H1 (cell line): ENCODE measurements at regions of chr15 and their contacts with region 1.

Region 1: DNA sequence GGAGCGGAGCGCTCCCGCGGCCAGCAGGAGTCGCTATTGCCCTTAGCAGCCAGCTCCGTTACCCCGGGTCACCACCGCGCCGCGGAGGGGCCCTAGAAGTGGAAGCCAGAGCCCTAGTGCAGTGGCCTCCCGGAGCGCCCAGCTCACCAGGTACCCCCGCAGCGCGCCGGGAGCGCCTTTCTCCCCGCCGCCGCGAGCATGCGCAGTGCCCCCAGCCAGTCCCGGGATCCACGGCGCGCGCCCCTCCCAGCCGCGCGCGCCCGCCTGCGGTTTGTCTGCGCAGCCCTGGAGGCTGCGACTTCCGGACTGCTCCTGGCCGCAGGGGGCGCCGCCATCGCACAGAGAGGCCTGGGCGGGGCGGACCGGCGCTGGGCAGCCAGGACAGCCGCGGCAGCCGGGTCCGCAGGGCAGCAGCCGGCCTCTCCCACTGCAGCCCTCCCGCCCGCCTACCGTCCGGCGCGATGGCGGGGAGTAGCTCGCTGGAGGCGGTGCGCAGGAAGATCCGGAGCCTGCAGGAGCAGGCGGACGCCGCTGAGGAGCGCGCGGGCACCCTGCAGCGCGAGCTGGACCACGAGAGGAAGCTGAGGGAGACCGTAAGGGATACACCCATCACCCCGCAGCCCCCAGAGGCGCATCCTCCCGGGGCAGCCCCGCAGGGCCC is 5.7 kb downstream of the TPM1 start:
- DNase-seq: peak; percentile 90 to 98
- H3K4me3 ChIP-seq: peak overlapping the region; percentile 42 to 98 (median 69)
- H3K27ac ChIP-seq: peak overlapping the region; percentile 37; the same call in 1 of the 2 replicates
- H3K4me1 ChIP-seq: peaks cover 15 to 37% (median 23%) of the 10 kb centered on the region in 4 experiments
- H3K27me3 ChIP-seq: no peaks in the 10 kb centered on the region
- CTCF ChIP-seq: peak; percentile 82 to 93 (median 90)
- EP300 ChIP-seq: peak in 1 of 2 experiments; percentile 75; a peak in 1 of 3 replicates
- POLR2A ChIP-seq: peak; percentile 68 to 90
- RAD21 ChIP-seq: peak; percentile 70 to 78

Region 2: GRCh38 chr15:62847900-62848489 is 200.2 kb before region 1 on chr15:
- CTCF ChIA-PET with region 1: interaction called, 58 read pairs
- POLR2A ChIA-PET with region 1: interaction called, 195 read pairs
- DNase-seq: peak; percentile 60 to 87
- H3K4me3 ChIP-seq: no peak overlapping the region
- H3K27ac ChIP-seq: no peak overlapping the region
- H3K4me1 ChIP-seq: peaks cover 12 to 26% (median 22%) of the 10 kb centered on the region in 4 experiments
- H3K27me3 ChIP-seq: no peaks in the 10 kb centered on the region
- CTCF ChIP-seq: peak; percentile 64 to 81 (median 76)
- EP300 ChIP-seq: no peak
- POLR2A ChIP-seq: no peak
- RAD21 ChIP-seq: peak; percentile 85 to 92

Region 3: GRCh38 chr15:62912808-62913207 is 135.4 kb before region 1 on chr15:
- CTCF ChIA-PET with region 1: interaction called, 3 read pairs
- POLR2A ChIA-PET with region 1: interaction called, 26 read pairs
- DNase-seq: no peak
- H3K4me3 ChIP-seq: no peak overlapping the region
- H3K27ac ChIP-seq: no peak overlapping the region
- H3K4me1 ChIP-seq: peaks cover 7 to 14% (median 11%) of the 10 kb centered on the region in 4 experiments
- H3K27me3 ChIP-seq: no peaks in the 10 kb centered on the region
- CTCF ChIP-seq: peak in 2 of 3 experiments; percentile 19 to 36; a peak in 3 of 4 replicates
- EP300 ChIP-seq: no peak
- POLR2A ChIP-seq: no peak
- RAD21 ChIP-seq: peak in 1 of 2 experiments; percentile 40; a peak in 1 of 4 replicates

Region 4: GRCh38 chr15:62999923-63000561 is 48.2 kb before region 1 on chr15:
- CTCF ChIA-PET with region 1: interaction called, 9 read pairs
- POLR2A ChIA-PET with region 1: interaction called, 11 read pairs
- DNase-seq: no peak
- H3K4me3 ChIP-seq: no peak overlapping the region
- H3K27ac ChIP-seq: no peak overlapping the region
- H3K4me1 ChIP-seq: no peaks in the 10 kb centered on the region
- H3K27me3 ChIP-seq: no peaks in the 10 kb centered on the region
- CTCF ChIP-seq: no peak
- EP300 ChIP-seq: no peak
- POLR2A ChIP-seq: no peak
- RAD21 ChIP-seq: no peak

Region 5: GRCh38 chr15:63019539-63020109 is 28.6 kb before region 1 on chr15:
- CTCF ChIA-PET with region 1: interaction called, 8 read pairs
- POLR2A ChIA-PET with region 1: interaction called, 11 read pairs
- DNase-seq: no peak
- H3K4me3 ChIP-seq: no peak overlapping the region
- H3K27ac ChIP-seq: no peak overlapping the region
- H3K4me1 ChIP-seq: peaks cover 0 to 4% (median under 1%) of the 10 kb centered on the region in 4 experiments; a peak in 2 of 7 replicates
- H3K27me3 ChIP-seq: no peaks in the 10 kb centered on the region
- CTCF ChIP-seq: peak in 2 of 3 experiments; percentile 2; a peak in 1 of 4 replicates
- EP300 ChIP-seq: no peak
- POLR2A ChIP-seq: no peak
- RAD21 ChIP-seq: no peak; a peak in 1 of 4 replicates

Region 6: GRCh38 chr15:63035977-63036376 is 12.3 kb before region 1 on chr15:
- CTCF ChIA-PET with region 1: interaction called, 20 read pairs
- POLR2A ChIA-PET with region 1: interaction called, 104 read pairs
- DNase-seq: no peak
- H3K4me3 ChIP-seq: no peak overlapping the region
- H3K27ac ChIP-seq: no peak overlapping the region
- H3K4me1 ChIP-seq: peaks cover 0 to 11% (median 6%) of the 10 kb centered on the region in 4 experiments; a peak in 5 of 7 replicates
- H3K27me3 ChIP-seq: no peaks in the 10 kb centered on the region; a peak in 1 of 7 replicates
- CTCF ChIP-seq: no peak
- EP300 ChIP-seq: no peak
- POLR2A ChIP-seq: no peak
- RAD21 ChIP-seq: peak in 1 of 2 experiments; percentile 24; a peak in 1 of 4 replicates

Region 7: DNA sequence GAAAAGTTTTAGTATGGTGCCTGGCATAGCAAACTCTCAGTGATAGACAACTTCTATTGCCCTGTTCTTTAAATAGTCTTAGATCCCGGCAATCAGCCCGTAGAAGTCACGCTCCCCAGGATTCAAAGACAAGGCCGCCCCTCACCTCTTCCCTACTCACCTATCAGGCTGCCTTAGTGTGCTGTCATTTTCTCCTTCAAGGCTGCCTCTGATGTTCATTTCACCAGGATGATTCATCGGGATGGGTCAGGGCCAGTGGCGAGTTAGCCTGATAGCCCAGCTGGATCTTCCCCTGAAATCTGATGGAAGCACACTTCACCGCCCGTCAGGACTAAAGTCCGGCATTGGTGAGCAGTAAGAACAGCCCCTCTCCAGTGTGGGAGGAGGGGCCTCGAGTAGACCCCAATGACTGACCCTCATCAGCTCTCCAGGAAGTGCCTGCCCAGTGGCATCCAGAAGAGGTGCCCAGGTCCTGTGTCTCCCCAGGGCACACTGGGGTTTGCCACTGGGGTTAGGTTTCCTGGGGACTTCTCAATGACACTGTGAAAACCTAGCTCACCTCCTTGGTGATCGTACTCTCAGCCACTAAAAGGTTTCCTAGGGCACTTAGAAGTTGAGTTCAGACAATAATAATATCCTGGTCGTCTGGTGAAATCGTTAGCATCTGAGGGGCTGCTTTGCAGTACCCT is 31.8 kb after region 1 on chr15:
- CTCF ChIA-PET with region 1: interaction called, 3 read pairs
- POLR2A ChIA-PET with region 1: interaction called, 635 read pairs
- DNase-seq: no peak
- H3K4me3 ChIP-seq: no peak overlapping the region
- H3K27ac ChIP-seq: no peak overlapping the region
- H3K4me1 ChIP-seq: peaks cover 15 to 28% (median 19%) of the 10 kb centered on the region in 4 experiments
- H3K27me3 ChIP-seq: no peaks in the 10 kb centered on the region
- CTCF ChIP-seq: no peak
- EP300 ChIP-seq: no peak
- POLR2A ChIP-seq: no peak
- RAD21 ChIP-seq: no peak

Region 8: DNA sequence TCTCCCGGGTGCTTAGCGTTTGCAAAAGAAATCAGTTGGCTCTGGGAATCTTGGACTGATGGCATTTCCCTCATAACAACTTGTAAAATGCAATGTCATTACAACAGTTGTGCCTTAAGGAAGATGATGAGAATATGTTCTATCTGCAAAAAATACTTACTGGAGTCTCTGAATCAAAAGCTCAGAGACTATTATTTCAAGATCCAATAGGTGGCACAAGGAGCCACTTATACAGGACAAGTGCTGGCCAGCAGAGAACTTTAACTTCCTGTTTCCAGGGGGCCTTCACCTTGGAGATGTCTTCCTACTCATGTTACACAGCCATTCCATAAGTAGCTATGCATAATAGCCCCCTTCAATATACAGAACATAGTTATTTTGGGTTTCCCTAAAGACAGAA is 118.0 kb after region 1 on chr15:
- CTCF ChIA-PET with region 1: no interaction called
- POLR2A ChIA-PET with region 1: no interaction called
- DNase-seq: peak in 1 of 2 experiments; percentile 34
- H3K4me3 ChIP-seq: no peak overlapping the region
- H3K27ac ChIP-seq: no peak overlapping the region
- H3K4me1 ChIP-seq: no peaks in the 10 kb centered on the region
- H3K27me3 ChIP-seq: no peaks in the 10 kb centered on the region
- CTCF ChIP-seq: no peak
- EP300 ChIP-seq: no peak
- POLR2A ChIP-seq: no peak
- RAD21 ChIP-seq: peak; percentile 25 to 41; a peak in 3 of 4 replicates